ENCODE measurements at regions of chr22 and their contacts with region 1.

Region 1: DNA sequence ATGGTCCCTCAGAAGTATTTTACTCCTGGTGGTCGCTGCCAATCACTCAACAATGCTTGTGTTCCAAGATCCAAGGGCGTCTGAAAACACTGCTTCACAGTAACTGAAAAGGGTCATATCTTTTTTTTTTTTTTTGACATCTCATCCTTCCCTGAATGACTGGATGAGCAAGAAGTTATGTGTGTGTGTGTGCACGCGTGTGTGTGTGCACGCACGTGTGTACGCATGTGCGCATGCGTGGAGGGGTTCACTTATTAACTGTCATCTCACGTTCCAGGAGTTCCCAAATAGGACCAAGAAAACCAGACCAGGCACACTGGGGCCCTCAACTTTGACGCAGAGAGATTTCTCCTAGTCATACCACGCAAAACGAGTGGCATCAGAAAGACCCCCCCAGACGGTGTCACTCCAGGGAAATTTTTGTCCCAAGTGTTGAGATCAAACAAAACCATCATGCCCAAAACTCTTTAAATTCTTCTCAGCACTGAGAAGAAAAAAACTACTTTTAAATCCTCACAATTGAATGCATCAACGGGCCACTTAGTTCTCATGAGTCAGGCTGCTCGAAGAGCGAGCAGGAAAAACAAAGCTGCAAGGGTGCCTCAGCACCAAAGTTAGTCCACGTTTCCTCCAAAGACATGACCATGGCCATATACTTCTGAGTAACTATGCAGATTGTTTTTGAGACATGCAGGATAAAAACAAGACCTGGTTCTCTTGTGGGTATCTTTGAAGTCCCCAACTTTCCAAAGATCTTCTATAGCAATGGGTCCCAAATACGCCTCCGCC is 12.9 kb downstream of the MN1 start:
- DNase-seq: no peak
- ATAC-seq: no peak
- H3K4me3 ChIP-seq: no peak overlapping the region
- H3K4me3 Mint-ChIP-seq: no peak overlapping the region
- H3K27ac ChIP-seq: no peak overlapping the region
- H3K27ac Mint-ChIP-seq: no peak overlapping the region
- H3K4me1 ChIP-seq: no peaks in the 10 kb centered on the region
- H3K4me1 Mint-ChIP-seq: no peaks in the 10 kb centered on the region
- H3K27me3 ChIP-seq: peaks cover 6 to 8% of the 10 kb centered on the region in 2 experiments
- H3K27me3 Mint-ChIP-seq: peaks cover 36% of the 10 kb centered on the region
- CTCF ChIP-seq: no peak

Region 2: DNA sequence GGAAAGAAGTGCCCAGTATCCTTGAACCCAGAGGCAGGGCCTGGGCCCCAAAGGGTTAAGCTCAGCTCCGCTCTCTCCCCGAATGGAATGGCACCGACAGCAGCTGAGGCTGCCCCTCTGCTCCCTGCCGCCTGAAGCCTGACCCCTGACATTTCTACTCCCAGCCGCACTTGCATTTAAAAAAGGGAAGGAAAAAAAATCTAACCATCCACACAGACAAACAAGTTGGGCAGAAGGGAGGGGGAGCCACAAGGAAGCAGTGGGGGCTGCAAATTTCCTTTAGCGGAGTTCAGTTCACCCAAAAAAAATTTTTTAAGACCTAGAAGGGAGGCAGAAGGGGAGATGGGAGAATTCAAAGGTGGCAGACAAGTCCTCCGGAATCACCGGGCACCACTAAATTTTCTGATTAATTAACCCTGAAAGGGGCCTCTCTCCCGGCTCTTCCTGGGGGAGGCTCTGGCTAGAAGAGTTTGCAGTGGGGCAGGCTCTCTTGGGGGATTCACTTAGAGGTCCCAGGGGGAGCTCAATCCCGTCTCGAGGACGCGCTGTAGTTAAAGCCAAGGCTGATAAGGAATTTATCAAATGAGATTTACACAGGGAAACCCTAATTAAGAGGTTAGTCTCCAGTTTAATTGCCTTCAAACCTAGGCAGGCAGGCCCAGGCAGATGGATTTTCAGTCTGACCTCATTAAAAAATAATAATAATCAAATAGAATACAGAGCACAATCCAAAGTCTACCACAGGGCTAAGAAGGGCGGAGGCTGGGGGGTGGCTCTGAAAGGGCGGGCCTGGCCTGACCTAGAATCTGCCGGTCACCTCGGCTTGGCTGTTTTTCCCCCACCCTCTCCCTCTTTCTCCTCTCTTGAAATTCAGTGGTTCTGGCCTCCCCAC is 12.7 kb before region 1 on chr22:
- CTCF ChIA-PET with region 1: no interaction called
- POLR2A ChIA-PET with region 1: no interaction called
- intact Hi-C with region 1: loop called in 1 of 2 experiments (anchors 1 kb)
- DNase-seq: no peak
- ATAC-seq: no peak
- H3K4me3 ChIP-seq: no peak overlapping the region
- H3K4me3 Mint-ChIP-seq: no peak overlapping the region
- H3K27ac ChIP-seq: no peak overlapping the region
- H3K27ac Mint-ChIP-seq: no peak overlapping the region
- H3K4me1 ChIP-seq: no peaks in the 10 kb centered on the region
- H3K4me1 Mint-ChIP-seq: no peaks in the 10 kb centered on the region
- H3K27me3 ChIP-seq: peaks cover 3 to 12% of the 10 kb centered on the region in 2 experiments
- H3K27me3 Mint-ChIP-seq: peaks cover 28% of the 10 kb centered on the region
- CTCF ChIP-seq: no peak

Region 3: DNA sequence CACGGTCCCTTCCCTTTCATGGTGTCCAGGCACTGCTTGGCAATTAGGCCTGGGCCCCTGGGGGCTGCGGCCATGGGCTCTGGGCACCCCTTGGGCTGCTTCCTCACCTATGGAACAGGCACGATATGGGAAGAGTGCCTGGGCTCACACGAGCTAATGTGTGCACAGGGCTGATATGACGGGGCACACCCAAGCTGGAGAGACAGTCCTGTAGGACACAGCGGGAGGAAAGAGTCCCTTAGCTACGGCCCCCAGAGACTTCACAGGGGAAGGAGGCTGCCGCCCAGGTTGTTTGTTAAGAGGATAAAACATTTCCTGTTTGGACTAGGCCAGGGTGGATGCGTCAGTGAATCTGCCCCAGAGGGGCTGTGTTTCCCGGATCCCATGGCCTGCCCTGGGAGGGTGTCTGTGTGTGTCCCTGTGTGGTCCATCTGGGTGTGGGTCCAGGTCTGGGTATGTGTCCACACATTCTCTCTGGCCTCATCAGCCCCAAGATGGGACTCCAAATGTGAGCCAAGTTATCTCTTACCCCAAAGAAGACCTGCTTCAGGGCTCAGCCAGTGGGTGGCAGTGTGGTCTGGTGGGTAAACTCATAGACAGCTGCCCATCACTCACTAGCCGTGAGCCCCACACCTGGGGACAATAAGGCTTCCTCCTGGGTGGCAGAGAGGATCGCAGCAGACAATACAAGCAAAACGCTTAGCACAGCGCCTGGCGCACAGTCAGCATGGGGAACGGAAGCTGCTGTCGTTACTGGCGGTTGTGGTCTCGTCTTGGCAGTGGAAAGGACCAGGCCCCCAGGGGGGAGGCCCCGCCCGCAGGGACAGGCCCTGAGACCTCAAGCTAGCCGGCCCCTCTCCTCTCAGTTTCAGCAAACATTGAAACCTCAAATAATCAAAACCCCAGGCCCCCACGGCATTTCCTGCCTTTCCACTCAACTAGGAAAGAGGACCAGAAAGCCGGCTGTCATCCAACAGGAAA is 1413.8 kb after region 1 on chr22:
- CTCF ChIA-PET with region 1: no interaction called
- POLR2A ChIA-PET with region 1: no interaction called
- intact Hi-C with region 1: no loop called
- DNase-seq: peak in 11 of 14 experiments; percentile 9 to 51 (median 37)
- ATAC-seq: peak; percentile 69
- H3K4me3 ChIP-seq: no peak overlapping the region
- H3K4me3 Mint-ChIP-seq: peak overlapping the region; percentile 67
- H3K27ac ChIP-seq: no peak overlapping the region
- H3K27ac Mint-ChIP-seq: peak overlapping the region; percentile 55
- H3K4me1 ChIP-seq: peaks cover 28% of the 10 kb centered on the region
- H3K4me1 Mint-ChIP-seq: peaks cover 13% of the 10 kb centered on the region
- H3K27me3 ChIP-seq: peaks cover 22 to 36% of the 10 kb centered on the region in 2 experiments
- H3K27me3 Mint-ChIP-seq: peaks cover 42% of the 10 kb centered on the region
- CTCF ChIP-seq: no peak